Body of pancreas (tissue), 4 donors: ENCODE measurements at regions of chr1 and their contacts with region 1.

Region 1: DNA sequence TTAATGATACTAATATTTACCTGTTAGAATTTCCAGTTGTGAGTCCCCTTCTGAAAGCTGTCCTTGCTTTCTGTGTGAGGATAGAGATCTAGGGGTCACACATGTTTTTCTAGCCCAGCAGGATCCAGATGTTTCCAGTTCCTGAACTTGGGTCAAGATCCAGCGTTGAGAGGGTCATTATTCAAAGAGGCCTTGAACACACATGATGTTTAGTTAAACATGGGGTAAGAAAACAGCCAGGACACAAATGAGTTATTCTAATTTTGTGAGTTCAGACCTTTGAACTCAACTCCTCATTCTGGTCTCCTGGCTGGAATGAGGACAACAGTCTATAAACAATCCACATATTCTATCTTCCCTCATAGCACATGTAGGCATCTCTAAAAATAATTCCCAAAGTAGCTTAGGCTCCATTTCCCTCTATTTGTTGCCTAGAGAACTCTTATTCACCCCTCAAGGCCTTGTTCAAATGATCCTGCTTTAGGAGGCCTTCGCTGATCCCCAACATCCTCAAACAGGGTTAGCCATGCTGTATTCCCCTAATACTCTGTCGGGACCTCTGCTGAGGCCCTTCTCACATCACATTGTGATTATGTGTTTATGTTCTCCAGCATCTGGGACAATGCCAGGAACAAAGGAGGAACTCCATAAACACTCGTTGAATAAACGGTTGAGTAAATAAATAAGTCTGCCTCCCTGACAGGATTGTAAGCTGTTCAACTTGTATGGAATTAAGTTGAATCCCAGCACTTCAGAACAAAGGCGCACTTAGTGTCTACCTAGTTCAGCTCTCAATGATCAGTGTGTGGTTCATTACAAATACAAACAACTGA is 15.0 kb upstream of the KCNN3 start:
- DNase-seq: peak in 1 of 4 donors; percentile 3
- ATAC-seq: no peak
- H3K4me3 ChIP-seq: no peak overlapping the region
- H3K27ac ChIP-seq: no peak overlapping the region
- H3K4me1 ChIP-seq: no peaks in the 10 kb centered on the region
- H3K27me3 ChIP-seq: no peaks in the 10 kb centered on the region
- CTCF ChIP-seq: no peak
- POLR2A ChIP-seq: no peak

Region 2: DNA sequence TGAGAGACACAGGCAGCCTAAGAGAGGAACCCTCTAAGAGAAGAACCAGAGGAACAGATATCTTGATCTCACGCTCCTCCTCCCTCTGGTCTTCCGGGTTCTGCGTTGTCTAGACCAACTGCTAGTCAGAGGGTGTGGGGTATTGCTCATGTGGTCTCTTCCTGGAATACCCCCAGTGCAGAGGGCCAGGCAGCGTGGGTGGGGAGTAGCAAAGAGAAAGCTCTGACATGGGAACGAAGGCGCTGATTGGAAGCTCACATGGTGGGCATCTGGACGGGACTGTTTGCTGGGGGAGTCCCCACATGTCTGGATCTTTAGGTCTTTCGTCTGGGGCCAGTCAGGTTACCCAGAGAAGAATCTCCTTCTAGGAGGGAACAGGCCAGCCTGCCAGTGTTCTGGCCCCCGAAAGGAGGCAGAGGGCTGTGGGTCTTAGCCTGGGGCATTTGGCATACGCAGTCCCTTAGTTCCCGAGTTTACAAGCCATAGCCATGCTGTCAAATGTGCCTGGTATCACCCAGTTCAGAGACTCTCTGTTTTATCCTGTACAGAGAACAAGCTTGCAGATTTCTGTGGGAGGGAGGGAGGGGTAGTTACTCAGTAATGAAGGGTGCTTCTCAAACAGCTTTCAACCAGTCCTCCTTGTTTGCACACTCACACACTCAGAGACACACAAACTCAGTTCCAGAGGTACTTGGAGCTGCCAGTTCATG is 498.3 kb before region 1 on chr1:
- intact Hi-C with region 1: no loop called
- DNase-seq: no peak
- ATAC-seq: no peak
- H3K4me3 ChIP-seq: no peak overlapping the region
- H3K27ac ChIP-seq: no peak overlapping the region
- H3K4me1 ChIP-seq: no peaks in the 10 kb centered on the region
- H3K27me3 ChIP-seq: no peaks in the 10 kb centered on the region
- CTCF ChIP-seq: no peak
- POLR2A ChIP-seq: no peak

Region 3: GRCh38 chr1:154559466-154560088 is 325.5 kb before region 1 on chr1:
- intact Hi-C with region 1: loop called (anchors 10 kb)
- DNase-seq: peak; percentile 91 to 95 (median 94)
- ATAC-seq: peak; percentile 74
- H3K4me3 ChIP-seq: peak overlapping the region in 1 of 2 donors; percentile 35
- H3K27ac ChIP-seq: peak overlapping the region; percentile 80 to 96 (median 92)
- H3K4me1 ChIP-seq: peaks cover 30% of the 10 kb centered on the region
- H3K27me3 ChIP-seq: no peaks in the 10 kb centered on the region
- CTCF ChIP-seq: peak; percentile 79 to 99 (median 97)
- POLR2A ChIP-seq: no peak

Region 4: GRCh38 chr1:154669464-154670282 is 215.4 kb before region 1 on chr1:
- intact Hi-C with region 1: loop called (anchors 5 kb)
- DNase-seq: peak; percentile 64 to 78 (median 74)
- ATAC-seq: peak; percentile 91
- H3K4me3 ChIP-seq: no peak overlapping the region
- H3K27ac ChIP-seq: no peak overlapping the region
- H3K4me1 ChIP-seq: no peaks in the 10 kb centered on the region
- H3K27me3 ChIP-seq: no peaks in the 10 kb centered on the region
- CTCF ChIP-seq: peak; percentile 28 to 79 (median 68)
- POLR2A ChIP-seq: no peak